ENCODE measurements at regions of chr9 and their contacts with region 1.

Region 1: DNA sequence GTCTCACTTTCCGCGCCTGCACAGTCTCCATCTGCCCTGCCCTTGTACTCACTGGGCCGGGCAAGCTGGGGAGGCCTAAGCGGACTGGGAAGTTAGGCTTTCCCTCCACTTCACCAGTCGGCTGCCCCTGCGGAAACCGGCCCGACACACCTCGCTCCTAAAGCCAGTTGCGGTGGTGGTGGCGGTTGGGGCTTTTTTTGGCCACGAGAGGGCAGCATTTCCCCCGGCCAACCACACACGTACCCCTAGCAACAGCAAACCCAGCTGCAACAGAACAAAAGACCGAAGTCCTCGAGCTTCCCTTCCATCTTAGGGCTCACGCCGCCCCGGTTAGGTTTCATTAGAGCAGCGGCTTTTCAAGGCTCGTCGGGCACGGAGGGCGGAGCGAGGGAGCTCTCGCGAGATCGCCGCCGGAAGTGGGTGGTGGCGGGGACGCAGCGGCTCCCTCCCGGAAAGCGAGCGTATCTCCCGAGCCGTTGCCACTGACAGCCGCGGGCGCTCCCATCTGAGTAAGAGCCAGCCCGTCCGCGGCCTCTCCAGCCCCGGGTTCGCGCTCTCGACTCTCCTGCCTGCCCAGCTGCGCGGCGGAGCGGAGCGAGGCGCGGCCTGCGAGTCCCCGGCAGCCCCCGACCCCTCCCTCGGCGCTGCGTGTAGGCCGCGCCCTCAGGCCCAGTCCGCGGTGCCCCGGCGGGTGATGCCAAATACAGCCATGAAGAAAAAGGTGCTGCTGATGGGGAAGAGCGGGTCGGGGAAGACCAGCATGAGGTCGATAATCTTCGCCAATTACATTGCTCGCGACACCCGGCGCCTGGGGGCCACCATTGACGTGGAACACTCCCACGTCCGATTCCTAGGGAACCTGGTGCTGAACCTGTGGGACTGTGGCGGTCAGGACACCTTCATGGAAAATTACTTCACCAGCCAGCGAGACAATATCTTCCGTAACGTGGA is at the start of gene RRAGA:
- DNase-seq: peak; percentile 96
- H3K4me3 Mint-ChIP-seq: peak within 1 kb of the TSS; percentile 97
- H3K27ac Mint-ChIP-seq: peak within 1 kb of the TSS; percentile 97
- H3K4me1 Mint-ChIP-seq: peaks cover 35% of the 10 kb centered on the region
- H3K27me3 Mint-ChIP-seq: no peaks in the 10 kb centered on the region
- total RNA-seq, gene RRAGA: 50.2 to 51.1 TPM

Region 2: GRCh38 chr9:18969128-18969527 is 80.1 kb before region 1 on chr9:
- CTCF ChIA-PET with region 1: no interaction called
- POLR2A ChIA-PET with region 1: no interaction called
- DNase-seq: no peak
- H3K4me3 Mint-ChIP-seq: no peak overlapping the region
- H3K27ac Mint-ChIP-seq: no peak overlapping the region
- H3K4me1 Mint-ChIP-seq: no peaks in the 10 kb centered on the region
- H3K27me3 Mint-ChIP-seq: peaks cover 31% of the 10 kb centered on the region

Region 3: GRCh38 chr9:19102631-19103345 is 53.5 kb after region 1 on chr9 and contains the start of gene HAUS6:
- CTCF ChIA-PET with region 1: interaction called, 6 read pairs
- POLR2A ChIA-PET with region 1: interaction called, 18 read pairs
- DNase-seq: peak; percentile 97
- H3K4me3 Mint-ChIP-seq: peak within 1 kb of the TSS; percentile 82
- H3K27ac Mint-ChIP-seq: peak within 1 kb of the TSS; percentile 93
- H3K4me1 Mint-ChIP-seq: peaks cover 32% of the 10 kb centered on the region
- H3K27me3 Mint-ChIP-seq: no peaks in the 10 kb centered on the region
- total RNA-seq, gene HAUS6: 26.4 to 26.5 TPM

Region 4: GRCh38 chr9:19174127-19174912 is 125.1 kb after region 1 on chr9:
- CTCF ChIA-PET with region 1: interaction called, 39 read pairs
- POLR2A ChIA-PET with region 1: interaction called, 12 read pairs
- DNase-seq: peak; percentile 58
- H3K4me3 Mint-ChIP-seq: peak overlapping the region; percentile 57
- H3K27ac Mint-ChIP-seq: no peak overlapping the region
- H3K4me1 Mint-ChIP-seq: peaks cover 29% of the 10 kb centered on the region
- H3K27me3 Mint-ChIP-seq: no peaks in the 10 kb centered on the region

Region 5: DNA sequence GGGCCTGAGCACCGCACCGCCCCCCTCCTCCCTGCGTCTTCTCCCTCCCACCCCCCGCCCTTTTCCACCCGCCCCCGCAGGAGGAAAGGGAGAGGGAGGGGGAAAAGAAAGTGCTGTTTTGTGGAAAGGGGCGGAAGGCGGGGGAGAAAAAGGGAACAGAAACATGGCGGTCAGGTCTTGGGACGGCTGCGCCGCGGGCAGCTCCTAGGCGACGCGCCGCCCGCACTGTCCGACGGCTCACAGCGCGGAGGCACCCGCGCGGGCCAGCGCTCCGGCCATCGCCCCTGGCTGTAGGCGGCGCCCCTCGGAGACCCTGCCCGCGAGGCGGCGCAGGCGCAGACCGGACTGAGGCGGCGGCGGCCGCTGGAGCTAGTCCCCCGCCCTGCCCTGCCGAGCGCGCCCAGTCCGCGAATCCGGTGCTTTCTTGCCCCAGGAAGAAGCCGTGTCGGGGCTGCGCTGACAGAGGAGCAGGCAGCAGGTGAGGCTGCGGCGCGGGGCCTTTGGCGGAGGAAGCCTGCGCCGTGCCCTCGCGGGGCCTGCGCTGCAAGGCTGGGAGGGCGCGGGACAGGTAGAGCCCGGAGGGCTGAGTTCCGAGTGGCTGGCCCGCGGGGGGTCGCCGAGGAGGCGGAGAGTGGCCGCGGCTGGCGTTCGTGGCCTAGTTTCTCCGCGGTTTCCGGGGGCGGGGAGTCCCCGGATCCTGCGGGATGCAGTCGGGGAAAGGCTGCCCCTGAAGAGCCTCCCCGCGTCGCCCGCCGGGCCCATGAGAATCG is 181.3 kb after region 1 on chr9 and contains the start of gene DENND4C:
- CTCF ChIA-PET with region 1: interaction called, 8 read pairs
- POLR2A ChIA-PET with region 1: interaction called, 14 read pairs
- DNase-seq: peak; percentile 86
- H3K4me3 Mint-ChIP-seq: peak within 1 kb of the TSS; percentile 75
- H3K27ac Mint-ChIP-seq: peak within 1 kb of the TSS; percentile 64
- H3K4me1 Mint-ChIP-seq: peaks cover 14% of the 10 kb centered on the region
- H3K27me3 Mint-ChIP-seq: no peaks in the 10 kb centered on the region
- total RNA-seq, gene DENND4C: 47.1 to 52.2 TPM

Region 6: DNA sequence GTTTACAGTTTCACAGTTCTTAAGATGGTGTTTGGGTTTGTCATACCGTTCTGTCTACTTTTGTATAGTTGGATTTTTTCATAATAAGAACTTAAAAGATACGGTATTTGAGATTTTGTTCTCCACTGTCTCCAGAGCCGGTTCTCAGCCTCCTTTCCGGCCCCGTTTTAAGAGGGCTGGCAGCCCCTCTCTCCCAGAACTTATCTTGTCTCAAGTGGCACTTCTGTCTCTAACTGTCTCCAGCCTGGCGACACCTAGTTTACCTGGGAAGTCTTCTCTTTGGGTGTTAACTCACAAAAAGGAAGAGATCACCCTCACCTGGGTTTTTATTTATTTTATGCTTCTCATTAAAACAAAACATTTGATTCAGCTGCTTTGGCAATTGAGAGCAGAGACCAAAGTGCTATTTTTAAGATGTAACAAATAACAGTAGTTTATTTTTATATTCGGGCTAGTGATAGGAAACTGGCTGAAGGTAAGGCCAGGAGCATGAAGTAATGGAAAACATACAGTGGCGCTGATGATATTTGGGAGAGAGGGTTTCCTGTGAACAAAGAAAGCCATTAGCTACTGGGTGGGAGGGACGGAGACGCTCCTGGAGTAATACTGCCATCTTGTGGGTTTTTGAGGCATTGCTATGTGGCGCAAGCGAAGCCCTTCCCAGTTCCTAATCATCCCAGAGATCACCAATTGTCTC is 407.9 kb after region 1 on chr9:
- CTCF ChIA-PET with region 1: interaction called, 14 read pairs
- POLR2A ChIA-PET with region 1: no interaction called
- DNase-seq: peak; percentile 68
- H3K4me3 Mint-ChIP-seq: peak overlapping the region; percentile 6
- H3K27ac Mint-ChIP-seq: no peak overlapping the region
- H3K4me1 Mint-ChIP-seq: peaks cover 14% of the 10 kb centered on the region
- H3K27me3 Mint-ChIP-seq: no peaks in the 10 kb centered on the region